T-cell (primary cell): ENCODE measurements at regions of chr14 and their contacts with region 1.

Region 1: DNA sequence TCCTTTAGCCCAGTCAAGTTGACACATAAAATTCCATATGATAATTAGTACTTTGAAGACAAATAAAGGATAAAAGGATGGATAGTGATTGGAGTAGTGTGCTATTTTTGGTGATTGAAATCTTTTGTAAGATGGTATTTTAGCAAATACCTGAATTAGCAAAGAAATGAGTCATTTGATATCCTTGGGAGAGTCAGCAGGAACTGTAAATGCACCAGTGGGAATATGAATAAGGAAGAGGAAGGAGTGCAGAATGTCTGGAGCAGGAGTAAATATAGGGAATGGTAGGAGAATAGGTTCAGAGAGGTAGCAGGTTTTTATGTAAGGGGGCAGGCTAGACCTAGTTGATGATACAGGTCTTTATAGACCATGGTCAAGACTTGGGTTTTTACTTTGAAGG is 75.0 kb downstream of the TRMT5 start:
- DNase-seq: no peak
- ATAC-seq: no peak
- H3K4me3 ChIP-seq: no peak overlapping the region
- H3K4me3 Mint-ChIP-seq: no peak overlapping the region
- H3K27ac ChIP-seq: no peak overlapping the region
- H3K27ac Mint-ChIP-seq: no peak overlapping the region
- H3K4me1 ChIP-seq: no peaks in the 10 kb centered on the region
- H3K4me1 Mint-ChIP-seq: peaks cover under 1 to 2% (median 1%) of the 10 kb centered on the region in 3 donors
- H3K27me3 ChIP-seq: no peaks in the 10 kb centered on the region
- H3K27me3 Mint-ChIP-seq: no peaks in the 10 kb centered on the region

Region 2: DNA sequence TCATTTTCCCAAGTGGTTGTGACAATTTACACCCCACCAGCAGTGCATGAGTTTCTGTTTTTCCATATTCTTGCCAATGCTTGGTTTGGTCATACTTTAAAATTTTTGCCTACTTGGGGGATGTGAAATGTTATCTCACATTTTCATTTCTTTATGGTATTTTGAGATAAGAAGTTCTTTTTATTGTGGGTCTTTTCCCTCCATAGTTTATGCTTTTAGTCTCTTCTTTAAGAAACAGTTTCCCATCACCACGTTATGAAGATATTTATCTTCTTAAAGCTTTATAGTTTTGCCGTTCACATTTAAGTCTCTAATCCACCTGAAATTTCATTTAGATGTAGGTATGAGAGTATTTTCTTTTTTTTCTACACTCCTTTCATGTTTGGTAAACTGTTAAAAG is 561.2 kb before region 1 on chr14:
- CTCF ChIA-PET with region 1: no interaction called
- POLR2A ChIA-PET with region 1: interaction called in 1 of 2 experiments, 10 read pairs
- DNase-seq: no peak
- ATAC-seq: no peak
- H3K4me3 ChIP-seq: no peak overlapping the region
- H3K4me3 Mint-ChIP-seq: no peak overlapping the region
- H3K27ac ChIP-seq: no peak overlapping the region
- H3K27ac Mint-ChIP-seq: no peak overlapping the region
- H3K4me1 ChIP-seq: no peaks in the 10 kb centered on the region
- H3K4me1 Mint-ChIP-seq: peaks cover 0 to 2% (median 0%) of the 10 kb centered on the region in 3 donors
- H3K27me3 ChIP-seq: no peaks in the 10 kb centered on the region
- H3K27me3 Mint-ChIP-seq: peaks cover 9 to 10% of the 10 kb centered on the region in 2 donors